GM12878 (cell line): ENCODE measurements at regions of chr6 and their contacts with region 1.

Region 1: DNA sequence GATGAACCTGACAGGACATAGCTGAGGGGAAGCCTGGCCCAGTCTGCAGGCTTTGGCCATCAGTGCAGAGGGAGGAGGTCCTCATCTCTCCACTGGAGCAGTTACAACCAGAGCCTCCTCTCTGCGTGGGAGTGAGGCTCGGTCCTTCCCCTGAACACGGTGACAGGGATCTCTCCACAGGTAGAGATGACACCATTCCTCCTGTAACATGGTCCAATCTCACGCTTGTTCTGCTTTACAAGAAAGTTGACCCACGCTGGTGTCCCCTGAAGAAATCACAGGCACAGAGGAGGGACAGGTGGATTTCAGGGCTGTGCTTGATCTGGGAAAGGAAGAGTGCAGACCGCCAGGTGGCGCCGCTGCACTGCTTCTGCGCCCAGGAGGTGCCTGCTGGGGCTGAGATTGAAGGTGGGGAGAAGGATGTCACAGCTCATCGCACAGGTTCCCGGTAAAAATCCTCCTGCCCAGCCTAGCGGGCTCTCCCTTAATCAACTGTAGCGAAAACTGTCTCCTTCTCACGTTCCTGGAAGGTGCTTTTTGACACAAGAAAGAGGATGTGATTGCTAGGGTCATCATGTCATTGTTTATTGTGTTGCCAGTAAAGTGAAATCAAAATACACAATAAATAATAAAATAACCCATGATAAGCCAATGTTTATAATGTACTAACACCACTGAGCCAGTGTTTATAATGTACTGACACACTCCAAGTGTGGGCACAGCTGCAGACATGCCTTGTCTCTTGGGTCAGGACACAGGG is 20.4 kb downstream of the HLA-G start:
- DNase-seq: peak; percentile 25
- ATAC-seq: peak; percentile 96
- H3K4me3 ChIP-seq: no peak overlapping the region
- H3K27ac ChIP-seq: no peak overlapping the region
- H3K4me1 ChIP-seq: no peaks in the 10 kb centered on the region
- H3K27me3 ChIP-seq: peaks cover 3 to 5% of the 10 kb centered on the region in 2 experiments; a peak in 2 of 4 replicates
- CTCF ChIP-seq: peak; percentile 89 to 98 (median 93)
- EP300 ChIP-seq: no peak
- POLR2A ChIP-seq: no peak
- RAD21 ChIP-seq: peak; percentile 99

Region 2: GRCh38 chr6:29976588-29977424 is 128.8 kb after region 1 on chr6:
- CTCF ChIA-PET with region 1: interaction called, 3 read pairs
- POLR2A ChIA-PET with region 1: no interaction called
- RAD21 ChIA-PET with region 1: interaction called, 12 read pairs
- SMC1A ChIA-PET with region 1: interaction called, 3 read pairs
- in situ Hi-C with region 1: no loop called
- intact Hi-C with region 1: no loop called
- DNase-seq: peak; percentile 13
- ATAC-seq: peak; percentile 99
- H3K4me3 ChIP-seq: peak overlapping the region; percentile 58
- H3K27ac ChIP-seq: no peak overlapping the region
- H3K4me1 ChIP-seq: peaks cover 4% of the 10 kb centered on the region; the same call in 1 of the 2 replicates
- H3K27me3 ChIP-seq: peaks cover 6 to 16% of the 10 kb centered on the region in 2 experiments
- CTCF ChIP-seq: peak; percentile 33 to 52 (median 45); a peak in 4 of 6 replicates
- EP300 ChIP-seq: no peak
- POLR2A ChIP-seq: no peak
- RAD21 ChIP-seq: peak; percentile 47

Region 3: GRCh38 chr6:30006170-30007131 is 158.4 kb after region 1 on chr6:
- CTCF ChIA-PET with region 1: interaction called, 55 read pairs
- POLR2A ChIA-PET with region 1: no interaction called
- RAD21 ChIA-PET with region 1: interaction called, 3 read pairs
- SMC1A ChIA-PET with region 1: interaction called, 35 read pairs
- in situ Hi-C with region 1: loop called (anchors 5 kb)
- intact Hi-C with region 1: no loop called
- DNase-seq: no peak
- ATAC-seq: no peak
- H3K4me3 ChIP-seq: peak overlapping the region; percentile 27; the same call in 1 of the 2 replicates
- H3K27ac ChIP-seq: no peak overlapping the region
- H3K4me1 ChIP-seq: no peaks in the 10 kb centered on the region
- H3K27me3 ChIP-seq: peaks cover 2 to 10% of the 10 kb centered on the region in 2 experiments; a peak in 3 of 4 replicates
- CTCF ChIP-seq: no peak
- EP300 ChIP-seq: no peak
- POLR2A ChIP-seq: no peak; the same call in 1 of the 2 replicates
- RAD21 ChIP-seq: no peak

Region 4: GRCh38 chr6:30013291-30013922 is 165.4 kb after region 1 on chr6:
- CTCF ChIA-PET with region 1: interaction called, 55 read pairs
- POLR2A ChIA-PET with region 1: no interaction called
- RAD21 ChIA-PET with region 1: interaction called, 16 read pairs
- SMC1A ChIA-PET with region 1: interaction called, 35 read pairs
- in situ Hi-C with region 1: loop called (anchors 5 kb)
- intact Hi-C with region 1: loop called (anchors 1 kb)
- DNase-seq: no peak
- ATAC-seq: peak; percentile 70
- H3K4me3 ChIP-seq: no peak overlapping the region
- H3K27ac ChIP-seq: no peak overlapping the region
- H3K4me1 ChIP-seq: no peaks in the 10 kb centered on the region
- H3K27me3 ChIP-seq: no peaks in the 10 kb centered on the region
- CTCF ChIP-seq: peak; percentile 68 to 81 (median 76)
- EP300 ChIP-seq: no peak
- POLR2A ChIP-seq: no peak
- RAD21 ChIP-seq: peak; percentile 81

Region 5: GRCh38 chr6:30169658-30170614 is 321.9 kb after region 1 on chr6:
- CTCF ChIA-PET with region 1: no interaction called
- POLR2A ChIA-PET with region 1: no interaction called
- RAD21 ChIA-PET with region 1: no interaction called
- SMC1A ChIA-PET with region 1: no interaction called
- in situ Hi-C with region 1: no loop called
- intact Hi-C with region 1: loop called (anchors 5 kb)
- DNase-seq: peak; percentile 20
- ATAC-seq: peak; percentile 93
- H3K4me3 ChIP-seq: no peak overlapping the region
- H3K27ac ChIP-seq: no peak overlapping the region
- H3K4me1 ChIP-seq: no peaks in the 10 kb centered on the region
- H3K27me3 ChIP-seq: peaks cover 8 to 20% of the 10 kb centered on the region in 2 experiments
- CTCF ChIP-seq: peak; percentile 74 to 81 (median 76)
- EP300 ChIP-seq: no peak
- POLR2A ChIP-seq: no peak
- RAD21 ChIP-seq: peak; percentile 90